GM18951 (cell line): ENCODE measurements at regions of chr18 and their contacts with region 1.

Region 1: GRCh38 chr18:305003-305501 is 37.2 kb upstream of the THOC1 start:
- POLR2A ChIP-seq: no peak

Region 2: GRCh38 chr18:629269-630150 is 324.5 kb after region 1 on chr18:
- in situ Hi-C with region 1: loop called (anchors 10 kb)
- POLR2A ChIP-seq: no peak